Esophagus muscularis mucosa (tissue), 4 donors: ENCODE measurements at regions of chr1 and their contacts with region 1.

Region 1: GRCh38 chr1:29033829-29034466 is 89.8 kb downstream of the TMEM200B start:
- DNase-seq: no peak
- H3K4me3 ChIP-seq: no peak overlapping the region
- H3K27ac ChIP-seq: no peak overlapping the region
- H3K4me1 ChIP-seq: peaks cover 0 to 8% (median 3%) of the 10 kb centered on the region in 4 donors
- H3K27me3 ChIP-seq: no peaks in the 10 kb centered on the region
- CTCF ChIP-seq: peak; percentile 62 to 78 (median 68)
- EP300 ChIP-seq: no peak
- POLR2A ChIP-seq: no peak

Region 2: GRCh38 chr1:28779751-28780408 is 254.1 kb before region 1 on chr1:
- intact Hi-C with region 1: loop called (anchors 5 kb)
- DNase-seq: no peak
- H3K4me3 ChIP-seq: no peak overlapping the region
- H3K27ac ChIP-seq: no peak overlapping the region
- H3K4me1 ChIP-seq: peaks cover 7 to 9% (median 8%) of the 10 kb centered on the region in 4 donors
- H3K27me3 ChIP-seq: no peaks in the 10 kb centered on the region
- CTCF ChIP-seq: no peak
- EP300 ChIP-seq: no peak
- POLR2A ChIP-seq: no peak

Region 3: GRCh38 chr1:29202584-29203340 is 168.8 kb after region 1 on chr1:
- intact Hi-C with region 1: loop called (anchors 5 kb)
- DNase-seq: peak; percentile 99
- H3K4me3 ChIP-seq: no peak overlapping the region
- H3K27ac ChIP-seq: peak overlapping the region; percentile 74 to 83 (median 80)
- H3K4me1 ChIP-seq: peaks cover 7 to 11% (median 10%) of the 10 kb centered on the region in 4 donors
- H3K27me3 ChIP-seq: no peaks in the 10 kb centered on the region
- CTCF ChIP-seq: peak; percentile 95 to 97 (median 95)
- EP300 ChIP-seq: no peak
- POLR2A ChIP-seq: no peak

Region 4: GRCh38 chr1:29344336-29344735 is 310.4 kb after region 1 on chr1:
- intact Hi-C with region 1: no loop called
- DNase-seq: no peak
- H3K4me3 ChIP-seq: no peak overlapping the region
- H3K27ac ChIP-seq: no peak overlapping the region
- H3K4me1 ChIP-seq: no peaks in the 10 kb centered on the region
- H3K27me3 ChIP-seq: peaks cover 0 to 57% (median 0%) of the 10 kb centered on the region in 4 donors
- CTCF ChIP-seq: no peak
- EP300 ChIP-seq: no peak
- POLR2A ChIP-seq: no peak